H1 (cell line): ENCODE measurements at regions of chr12 and their contacts with region 1.

Region 1: GRCh38 chr12:50006789-50007436 is 18.4 kb downstream of the RACGAP1 start:
- DNase-seq: no peak
- H3K4me3 ChIP-seq: no peak overlapping the region
- H3K27ac ChIP-seq: no peak overlapping the region
- H3K4me1 ChIP-seq: no peaks in the 10 kb centered on the region
- H3K27me3 ChIP-seq: no peaks in the 10 kb centered on the region
- CTCF ChIP-seq: no peak
- EP300 ChIP-seq: no peak
- POLR2A ChIP-seq: no peak
- RAD21 ChIP-seq: no peak

Region 2: GRCh38 chr12:50074936-50075807 is 68.3 kb after region 1 on chr12:
- CTCF ChIA-PET with region 1: interaction called, 24 read pairs
- POLR2A ChIA-PET with region 1: no interaction called
- DNase-seq: peak in 1 of 2 experiments; percentile 93
- H3K4me3 ChIP-seq: no peak overlapping the region
- H3K27ac ChIP-seq: no peak overlapping the region
- H3K4me1 ChIP-seq: peaks cover 0 to 6% (median 3%) of the 10 kb centered on the region in 4 experiments; a peak in 5 of 7 replicates
- H3K27me3 ChIP-seq: peaks cover 0 to 4% (median under 1%) of the 10 kb centered on the region in 4 experiments; a peak in 2 of 7 replicates
- CTCF ChIP-seq: peak; percentile 92 to 94 (median 94)
- EP300 ChIP-seq: no peak
- POLR2A ChIP-seq: no peak
- RAD21 ChIP-seq: peak; percentile 96 to 97